A549 (cell line): ENCODE measurements at regions of chr6 and their contacts with region 1.

Region 1: DNA sequence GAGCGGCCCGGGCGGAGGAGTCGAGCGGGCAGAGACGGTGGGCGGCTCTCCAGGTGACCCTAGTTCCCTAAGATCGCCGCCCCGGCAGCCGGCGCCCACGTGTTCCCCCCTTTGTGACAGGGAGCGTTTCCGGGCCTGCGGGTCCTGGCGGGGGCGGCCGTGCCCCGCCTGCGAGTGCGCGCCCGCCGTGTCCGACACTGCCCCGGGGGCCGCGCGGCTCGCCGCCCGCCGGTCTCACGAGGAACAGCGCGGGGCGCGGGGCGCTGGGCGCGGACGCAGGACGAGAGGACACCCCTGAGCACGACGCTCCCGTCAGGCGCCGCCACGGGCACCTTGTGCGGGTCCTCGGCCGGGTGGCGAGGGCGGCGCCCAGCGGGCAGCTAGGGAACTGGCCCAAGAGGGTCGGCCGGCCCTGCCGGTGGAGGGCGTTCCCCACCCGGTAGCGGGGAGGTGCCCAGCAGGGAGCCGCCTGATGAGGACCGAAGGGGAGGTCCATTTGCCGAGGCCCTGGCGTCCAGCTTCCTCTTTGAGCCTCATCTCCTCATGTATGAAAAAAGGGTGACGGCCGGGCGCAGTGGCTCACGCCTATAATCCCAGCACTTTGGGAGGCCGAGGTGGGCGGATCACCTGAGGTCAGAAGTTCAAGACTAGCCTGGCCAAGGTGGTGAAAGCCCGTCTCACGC is at the start of gene VARS1:
- DNase-seq: peak; percentile 88 to 92
- ATAC-seq: peak; percentile 88 to 91
- H3K4me3 ChIP-seq: peak within 1 kb of the TSS; percentile 97
- H3K27ac ChIP-seq: peak within 1 kb of the TSS; percentile 94 to 97
- H3K4me1 ChIP-seq: peaks cover 23% of the 10 kb centered on the region; the same call in 2 of the 3 replicates
- CTCF ChIP-seq: peak; percentile 67
- EP300 ChIP-seq: no peak
- POLR2A ChIP-seq: no peak; the same call in none of the 2 replicates
- RAD21 ChIP-seq: peak; percentile 31 to 70; a peak in 4 of 5 replicates
- polyA plus RNA-seq, gene VARS1: 17.7 and 24.7 TPM in 2 replicates

Region 2: GRCh38 chr6:31729515-31729978 is 66.2 kb before region 1 on chr6:
- CTCF ChIA-PET with region 1: interaction called, 12 read pairs
- POLR2A ChIA-PET with region 1: interaction called, 5 read pairs
- DNase-seq: peak; percentile 80 to 85
- ATAC-seq: peak; percentile 85 to 88
- H3K4me3 ChIP-seq: peak overlapping the region; percentile 58
- H3K27ac ChIP-seq: peak overlapping the region; percentile 76 to 95
- H3K4me1 ChIP-seq: peaks cover 17% of the 10 kb centered on the region
- CTCF ChIP-seq: peak; percentile 68
- EP300 ChIP-seq: no peak
- POLR2A ChIP-seq: peak; percentile 35
- RAD21 ChIP-seq: peak; percentile 77 to 85; a peak in 4 of 5 replicates

Region 3: GRCh38 chr6:31775184-31775583 is 20.6 kb before region 1 on chr6:
- CTCF ChIA-PET with region 1: interaction called, 18 read pairs
- POLR2A ChIA-PET with region 1: no interaction called
- DNase-seq: no peak
- ATAC-seq: peak in 1 of 2 experiments; percentile 46; a peak in 3 of 6 replicates
- H3K4me3 ChIP-seq: no peak overlapping the region
- H3K27ac ChIP-seq: peak overlapping the region; percentile 70 to 86; a peak in 4 of 6 replicates
- H3K4me1 ChIP-seq: peaks cover 32% of the 10 kb centered on the region
- CTCF ChIP-seq: no peak
- EP300 ChIP-seq: no peak
- POLR2A ChIP-seq: no peak
- RAD21 ChIP-seq: no peak

Region 4: DNA sequence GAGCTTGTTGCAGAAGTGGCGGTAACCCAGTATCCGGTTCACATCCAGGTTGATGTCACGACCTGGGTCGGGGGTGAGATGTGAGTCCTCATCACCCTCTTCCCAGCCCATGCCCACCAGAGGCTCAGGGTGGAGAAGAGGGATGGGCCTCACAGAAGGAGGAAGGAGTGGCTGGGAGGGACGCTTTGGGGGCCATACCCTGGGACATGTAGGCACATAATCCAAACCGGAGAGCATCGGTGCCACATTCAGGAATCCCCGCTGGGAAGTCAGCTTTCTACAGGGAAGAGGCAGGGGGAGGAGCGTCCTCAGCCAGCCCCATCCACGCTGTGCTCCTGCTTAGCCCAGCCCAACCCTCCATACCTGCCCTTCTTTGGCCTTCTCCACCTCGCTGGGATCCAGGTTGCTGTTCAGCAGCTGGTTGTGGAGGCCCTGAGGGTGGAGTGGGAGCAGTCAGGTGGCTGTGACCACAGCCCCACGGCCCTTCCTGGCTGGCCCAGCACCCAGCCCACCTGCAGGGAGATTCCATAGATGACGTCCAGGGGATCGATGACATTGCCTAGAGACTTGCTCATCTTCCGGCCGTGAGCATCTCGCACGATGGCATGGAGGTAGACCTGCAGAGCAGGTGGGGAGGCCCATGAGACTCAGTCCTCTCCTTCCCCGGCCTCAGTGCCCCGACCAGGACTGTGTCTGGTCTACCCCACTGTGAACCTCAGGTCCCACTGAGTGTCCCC is 15.1 kb before region 1 on chr6:
- CTCF ChIA-PET with region 1: interaction called, 18 read pairs
- POLR2A ChIA-PET with region 1: no interaction called
- DNase-seq: no peak
- ATAC-seq: no peak
- H3K4me3 ChIP-seq: no peak overlapping the region
- H3K27ac ChIP-seq: no peak overlapping the region
- H3K4me1 ChIP-seq: peaks cover 23% of the 10 kb centered on the region
- CTCF ChIP-seq: no peak
- EP300 ChIP-seq: no peak
- POLR2A ChIP-seq: no peak
- RAD21 ChIP-seq: no peak

Region 5: DNA sequence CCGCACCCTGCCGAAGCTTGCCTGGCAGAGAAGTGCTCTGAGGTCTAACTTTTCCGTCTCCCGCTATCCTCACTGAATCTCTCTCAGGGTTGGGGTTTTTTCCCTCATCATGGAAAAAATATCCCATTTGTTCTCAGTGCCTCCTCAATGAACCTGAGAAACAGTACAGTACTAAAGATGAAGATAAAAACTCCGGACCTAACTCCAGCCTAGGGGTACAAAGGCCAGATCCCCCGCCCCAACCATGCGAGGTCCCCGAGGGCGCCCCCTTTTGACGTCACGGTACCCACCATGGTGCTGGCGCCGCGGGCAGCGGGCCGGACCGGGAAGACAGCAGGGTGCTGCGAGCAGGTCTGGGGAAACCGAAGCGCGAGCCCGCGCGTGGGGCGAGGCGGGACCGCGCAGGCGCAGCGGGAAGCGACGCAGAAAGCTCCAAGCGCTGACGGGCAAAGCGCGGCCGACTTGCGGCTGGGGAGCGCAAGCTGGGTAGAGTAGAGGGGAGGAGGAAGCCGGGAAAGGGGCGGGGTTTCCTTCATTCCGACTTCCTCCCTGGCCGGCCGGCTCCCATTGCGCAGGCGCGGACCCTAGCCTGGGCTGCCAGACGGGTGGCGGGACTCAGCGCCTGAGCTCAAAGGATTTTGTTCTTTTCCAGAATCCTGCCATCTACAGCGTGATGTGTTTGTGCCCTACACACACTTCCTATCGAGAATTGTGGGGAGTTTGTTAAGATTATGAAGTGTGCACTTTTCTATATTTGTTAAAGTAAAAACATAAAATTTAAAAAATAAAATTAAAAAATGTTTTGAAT is 10.9 kb after region 1 on chr6 and contains the start of gene LSM2:
- CTCF ChIA-PET with region 1: interaction called, 27 read pairs
- POLR2A ChIA-PET with region 1: interaction called, 18 read pairs
- DNase-seq: peak; percentile 89 to 94
- ATAC-seq: peak; percentile 96 to 97
- H3K4me3 ChIP-seq: peak within 1 kb of the TSS; percentile 56
- H3K27ac ChIP-seq: peak within 1 kb of the TSS; percentile 84 to 92
- H3K4me1 ChIP-seq: peaks cover 12% of the 10 kb centered on the region
- CTCF ChIP-seq: peak; percentile 31
- EP300 ChIP-seq: no peak
- POLR2A ChIP-seq: peak; percentile 40
- RAD21 ChIP-seq: no peak; a peak in 1 of 5 replicates
- polyA plus RNA-seq, gene LSM2: 54.7 and 73.8 TPM in 2 replicates

Region 6: GRCh38 chr6:31815025-31815838 is 19.5 kb after region 1 on chr6 and contains the starts of genes HSPA1A and HSPA1L:
- CTCF ChIA-PET with region 1: interaction called, 8 read pairs
- POLR2A ChIA-PET with region 1: interaction called, 28 read pairs
- DNase-seq: peak; percentile 93 to 97
- ATAC-seq: peak; percentile 78 to 89
- H3K4me3 ChIP-seq: peak within 1 kb of the TSS; percentile 59
- H3K27ac ChIP-seq: peak within 1 kb of the TSS; percentile 96 to 97
- H3K4me1 ChIP-seq: peaks cover 30% of the 10 kb centered on the region
- CTCF ChIP-seq: no peak
- EP300 ChIP-seq: no peak
- POLR2A ChIP-seq: peak; percentile 100
- RAD21 ChIP-seq: no peak
- polyA plus RNA-seq, gene HSPA1A: 88.2 and 122 TPM in 2 replicates
- polyA plus RNA-seq, gene HSPA1L: 1.2 and 1.6 TPM in 2 replicates